ENCODE measurements at regions of chr14 and their contacts with region 1.

Region 1: GRCh38 chr14:65958664-65959562 is 527.3 kb upstream of the CCDC196 start:
- DNase-seq: no peak
- ATAC-seq: peak in 1 of 2 donors; percentile 51
- H3K4me3 ChIP-seq: no peak overlapping the region
- H3K27ac ChIP-seq: no peak overlapping the region
- H3K4me1 ChIP-seq: no peaks in the 10 kb centered on the region
- H3K27me3 ChIP-seq: no peaks in the 10 kb centered on the region
- CTCF ChIP-seq: peak in 2 of 5 experiments; percentile 40 to 41
- POLR2A ChIP-seq: no peak

Region 2: DNA sequence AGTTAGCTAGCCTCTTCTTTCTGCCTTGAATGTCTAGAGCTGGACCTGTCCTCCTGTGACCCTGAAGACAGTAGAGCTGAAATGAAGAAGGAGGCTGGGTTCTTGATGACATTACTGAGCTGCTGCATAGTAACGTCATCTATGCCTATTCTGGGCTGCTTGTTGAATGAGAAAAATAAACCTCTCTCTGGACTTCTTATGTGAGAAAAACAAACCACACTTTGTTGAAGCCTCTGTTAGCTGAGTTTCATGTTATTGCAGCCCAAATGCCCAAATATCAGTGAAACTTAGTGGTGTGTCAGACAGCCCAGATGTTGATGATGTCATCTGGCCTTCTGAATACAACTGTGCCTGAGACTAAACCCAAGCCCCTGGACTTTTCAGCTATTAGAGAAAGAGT is 789.6 kb before region 1 on chr14:
- in situ Hi-C with region 1: loop called in 3 of 4 experiments (anchors 5 to 25 kb)
- intact Hi-C with region 1: loop called (anchors 5 kb)
- DNase-seq: no peak
- ATAC-seq: peak; percentile 54 to 64
- H3K4me3 ChIP-seq: no peak overlapping the region
- H3K27ac ChIP-seq: peak overlapping the region; percentile 21 to 65 (median 56)
- H3K4me1 ChIP-seq: peaks cover 4 to 5% of the 10 kb centered on the region in 2 donors
- H3K27me3 ChIP-seq: peaks cover 8 to 13% (median 10%) of the 10 kb centered on the region in 3 donors
- CTCF ChIP-seq: no peak
- POLR2A ChIP-seq: no peak